ENCODE measurements at regions of chr17 and their contacts with region 1.

Region 1: DNA sequence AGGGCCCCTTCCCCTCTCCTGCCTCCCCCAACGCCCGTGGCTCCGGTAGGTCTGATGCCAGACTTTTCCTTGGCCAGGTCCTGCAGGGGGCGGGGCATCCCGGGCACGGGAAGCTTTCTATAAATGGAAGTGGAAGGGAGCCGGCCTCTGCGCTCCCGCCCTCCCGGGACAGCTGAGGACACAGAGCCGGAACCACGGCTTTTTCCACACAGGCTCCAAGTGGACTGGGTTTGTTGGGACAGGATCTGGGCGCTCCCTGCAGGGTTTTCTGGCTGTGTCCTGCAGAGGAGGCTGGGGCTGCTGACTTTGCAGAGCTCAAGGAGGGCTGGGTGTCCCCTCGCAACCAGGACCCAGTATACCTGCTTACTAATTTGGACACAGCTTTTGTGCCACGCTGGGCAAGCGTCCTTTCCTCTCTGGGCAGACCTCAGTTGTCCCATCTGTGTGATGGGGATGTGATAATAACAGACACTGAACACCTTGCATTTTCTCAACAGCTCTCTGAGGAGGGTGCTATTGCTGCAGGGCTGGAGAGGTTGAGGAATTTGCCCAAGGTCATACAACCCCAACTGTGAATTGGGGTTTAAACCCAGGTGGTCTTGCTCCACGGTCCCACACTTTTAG is 1.8 kb downstream of the TNS4 start:
- DNase-seq: no peak
- H3K27ac ChIP-seq: peak overlapping the region; percentile 100
- CTCF ChIP-seq: no peak

Region 2: GRCh38 chr17:40510328-40510648 is 10.6 kb after region 1 on chr17:
- CTCF ChIA-PET with region 1: interaction called, 5 read pairs
- POLR2A ChIA-PET with region 1: interaction called, 15 read pairs
- DNase-seq: peak; percentile 91
- H3K27ac ChIP-seq: peak overlapping the region; percentile 99
- CTCF ChIP-seq: no peak

Region 3: DNA sequence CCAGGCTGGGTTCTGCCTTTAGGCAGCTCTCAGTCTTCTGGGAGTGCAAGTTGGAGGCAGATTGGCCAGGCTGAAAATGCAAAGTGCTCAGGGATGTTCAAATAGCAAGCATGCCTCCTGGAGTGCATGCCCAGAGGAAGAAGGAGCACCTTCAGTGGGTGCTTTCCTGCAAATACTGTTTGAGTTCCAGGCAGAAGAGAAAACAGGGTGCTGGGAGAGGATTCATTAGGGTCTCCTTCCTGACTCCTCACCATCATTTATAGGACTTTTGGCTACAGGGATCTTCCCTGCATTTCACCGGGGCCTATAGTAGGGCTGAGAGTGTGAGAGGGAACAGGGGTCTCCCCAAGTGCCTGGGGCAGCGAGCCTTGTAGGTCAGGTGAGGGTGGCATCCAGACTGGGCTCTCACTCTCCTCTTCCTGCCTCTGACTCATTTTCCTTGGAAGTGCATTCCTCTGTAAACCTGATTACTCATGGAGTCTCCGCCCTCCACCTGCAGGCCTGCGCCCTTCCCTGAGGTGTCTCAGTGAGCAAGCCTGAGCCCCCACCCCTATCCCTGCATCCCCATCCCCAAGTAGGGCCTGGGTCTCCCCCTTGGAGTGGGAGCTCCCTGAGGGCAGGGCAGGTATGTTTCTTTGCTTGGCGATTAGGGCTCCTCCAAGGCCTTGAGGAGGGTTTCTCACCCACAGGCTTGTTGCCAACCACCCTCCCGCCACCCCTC is 18.9 kb after region 1 on chr17:
- CTCF ChIA-PET with region 1: interaction called, 3 read pairs
- POLR2A ChIA-PET with region 1: interaction called, 26 read pairs
- DNase-seq: peak; percentile 89
- H3K27ac ChIP-seq: peak overlapping the region; percentile 99
- CTCF ChIP-seq: no peak

Region 4: GRCh38 chr17:40699371-40699770 is 199.7 kb after region 1 on chr17:
- CTCF ChIA-PET with region 1: no interaction called
- POLR2A ChIA-PET with region 1: no interaction called
- DNase-seq: no peak
- H3K27ac ChIP-seq: no peak overlapping the region
- CTCF ChIP-seq: no peak

Measured in RWPE1 (cell line).